Sigmoid colon (tissue), 7 donors: ENCODE measurements at regions of chr2 and their contacts with region 1.

Region 1: DNA sequence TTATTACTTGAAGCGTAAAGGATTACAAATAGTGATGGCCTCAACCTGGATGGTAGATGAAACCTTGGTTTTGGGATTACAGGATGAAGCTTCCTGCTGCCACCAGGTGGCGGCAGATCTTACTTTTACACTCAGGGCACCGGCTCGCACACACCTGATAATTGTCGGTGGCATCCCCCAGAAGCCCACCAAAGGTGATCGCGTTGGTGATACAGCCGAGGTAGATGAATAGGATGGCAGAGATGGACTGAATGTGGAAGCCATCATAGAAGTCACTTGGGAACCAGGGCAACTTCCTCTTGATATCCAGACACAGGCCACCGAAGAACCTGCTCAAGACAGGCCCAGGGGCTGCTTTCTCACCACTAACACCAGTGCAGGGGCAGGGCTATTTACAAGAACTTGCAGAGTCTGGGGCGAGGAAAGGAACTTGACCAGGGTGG is 51.8 kb downstream of the MTHFD2 start:
- DNase-seq: no peak
- H3K4me3 ChIP-seq: no peak overlapping the region
- H3K27ac ChIP-seq: no peak overlapping the region
- H3K4me1 ChIP-seq: no peaks in the 10 kb centered on the region
- H3K27me3 ChIP-seq: no peaks in the 10 kb centered on the region
- CTCF ChIP-seq: peak; percentile 45 to 70 (median 58)
- EP300 ChIP-seq: no peak
- POLR2A ChIP-seq: no peak

Region 2: GRCh38 chr2:74227646-74228045 is 22.6 kb before region 1 on chr2:
- intact Hi-C with region 1: no loop called
- DNase-seq: no peak
- H3K4me3 ChIP-seq: no peak overlapping the region
- H3K27ac ChIP-seq: no peak overlapping the region
- H3K4me1 ChIP-seq: no peaks in the 10 kb centered on the region
- H3K27me3 ChIP-seq: no peaks in the 10 kb centered on the region
- CTCF ChIP-seq: no peak
- EP300 ChIP-seq: no peak
- POLR2A ChIP-seq: no peak

Region 3: GRCh38 chr2:74278176-74278575 is 28.0 kb after region 1 on chr2:
- intact Hi-C with region 1: no loop called
- DNase-seq: no peak
- H3K4me3 ChIP-seq: no peak overlapping the region
- H3K27ac ChIP-seq: no peak overlapping the region
- H3K4me1 ChIP-seq: no peaks in the 10 kb centered on the region
- H3K27me3 ChIP-seq: no peaks in the 10 kb centered on the region
- CTCF ChIP-seq: no peak
- EP300 ChIP-seq: no peak
- POLR2A ChIP-seq: no peak

Region 4: DNA sequence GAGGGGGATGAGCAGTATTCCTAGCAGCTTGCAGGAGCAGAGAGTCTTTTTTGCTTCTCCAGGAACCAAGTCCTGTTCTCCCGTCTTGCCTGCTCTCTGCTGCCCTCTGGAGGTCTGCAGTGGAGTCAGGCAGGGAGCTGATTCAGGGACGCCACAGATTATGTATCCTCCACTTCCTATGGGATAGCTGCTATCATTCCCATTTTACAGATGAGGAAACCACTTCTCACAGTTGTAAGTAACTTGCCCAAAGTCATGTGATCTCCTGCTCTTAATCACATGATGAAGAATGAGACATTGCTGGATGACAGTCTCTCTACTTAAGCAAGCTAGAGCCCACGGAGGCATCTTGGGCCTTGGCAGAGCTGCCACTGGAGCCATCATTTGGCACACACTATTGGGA is 84.7 kb after region 1 on chr2:
- intact Hi-C with region 1: loop called (anchors 2 kb)
- DNase-seq: peak; percentile 73
- H3K4me3 ChIP-seq: no peak overlapping the region
- H3K27ac ChIP-seq: no peak overlapping the region
- H3K4me1 ChIP-seq: no peaks in the 10 kb centered on the region
- H3K27me3 ChIP-seq: no peaks in the 10 kb centered on the region
- CTCF ChIP-seq: peak; percentile 41 to 96 (median 76)
- EP300 ChIP-seq: no peak
- POLR2A ChIP-seq: no peak

Region 5: DNA sequence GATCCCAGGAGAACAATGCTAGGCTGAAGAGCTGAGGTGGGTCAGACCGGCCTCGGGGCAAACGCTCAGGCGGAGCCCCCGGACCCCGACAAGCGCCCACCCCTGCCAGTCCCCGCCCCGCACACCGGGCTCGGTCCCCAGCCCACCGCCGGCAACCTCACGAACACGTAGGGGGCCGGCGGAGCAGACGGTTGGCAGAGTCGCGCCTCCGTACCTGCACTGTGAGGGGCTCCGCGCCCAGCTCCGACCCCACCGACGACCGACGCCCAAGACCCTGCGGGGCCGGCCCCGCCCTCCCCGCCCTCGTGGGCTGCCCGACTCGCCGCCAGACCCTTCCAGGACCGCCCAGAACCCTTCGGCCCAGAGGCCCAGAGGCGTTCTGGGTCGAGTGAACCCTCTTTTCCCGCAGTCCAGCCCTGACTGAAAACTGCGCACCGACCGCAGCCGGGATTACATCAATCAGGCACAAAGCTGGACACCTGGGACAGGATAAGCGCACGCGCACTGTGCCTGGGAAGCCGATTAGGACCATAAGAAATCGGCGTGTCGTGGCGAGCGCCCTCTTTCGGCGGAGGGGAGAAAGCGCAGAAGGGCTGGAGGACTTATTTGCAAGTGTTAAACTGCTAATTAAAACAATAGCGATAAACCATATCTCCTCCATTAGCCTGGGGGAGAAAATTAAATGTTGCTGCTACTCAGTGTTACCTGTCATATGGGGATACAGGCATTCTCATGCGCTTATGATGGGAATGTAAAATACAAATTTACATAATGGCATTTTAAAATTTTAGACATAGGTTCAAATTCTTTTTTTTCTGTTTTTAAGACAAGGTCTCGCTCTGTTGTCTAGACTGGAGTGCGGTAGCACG is 141.6 kb after region 1 on chr2:
- intact Hi-C with region 1: loop called (anchors 10 kb)
- DNase-seq: peak; percentile 96
- H3K4me3 ChIP-seq: peak overlapping the region; percentile 94 to 99 (median 96)
- H3K27ac ChIP-seq: peak overlapping the region; percentile 90 to 96 (median 93)
- H3K4me1 ChIP-seq: peaks cover 0 to 48% (median 39%) of the 10 kb centered on the region in 4 donors
- H3K27me3 ChIP-seq: no peaks in the 10 kb centered on the region
- CTCF ChIP-seq: peak; percentile 88 to 96 (median 94)
- EP300 ChIP-seq: no peak
- POLR2A ChIP-seq: peak in 1 of 2 donors; percentile 14

Region 6: GRCh38 chr2:74566754-74567085 is 316.5 kb after region 1 on chr2:
- intact Hi-C with region 1: no loop called
- DNase-seq: no peak
- H3K4me3 ChIP-seq: no peak overlapping the region
- H3K27ac ChIP-seq: peak overlapping the region in 3 of 4 donors; percentile 65 to 68 (median 67)
- H3K4me1 ChIP-seq: peaks cover 0 to 15% (median 11%) of the 10 kb centered on the region in 4 donors
- H3K27me3 ChIP-seq: peaks cover 0 to 4% (median 0%) of the 10 kb centered on the region in 3 donors
- CTCF ChIP-seq: no peak
- EP300 ChIP-seq: no peak
- POLR2A ChIP-seq: no peak

Region 7: GRCh38 chr2:74768401-74768914 is 518.2 kb after region 1 on chr2:
- intact Hi-C with region 1: no loop called
- DNase-seq: no peak
- H3K4me3 ChIP-seq: no peak overlapping the region
- H3K27ac ChIP-seq: peak overlapping the region in 3 of 4 donors; percentile 28 to 65 (median 47)
- H3K4me1 ChIP-seq: peaks cover 0 to 19% (median 6%) of the 10 kb centered on the region in 4 donors
- H3K27me3 ChIP-seq: no peaks in the 10 kb centered on the region
- CTCF ChIP-seq: no peak
- EP300 ChIP-seq: no peak
- POLR2A ChIP-seq: no peak